CD8-positive, alpha-beta T cell (primary cell): ENCODE measurements at regions of chr11 and their contacts with region 1.

Region 1: DNA sequence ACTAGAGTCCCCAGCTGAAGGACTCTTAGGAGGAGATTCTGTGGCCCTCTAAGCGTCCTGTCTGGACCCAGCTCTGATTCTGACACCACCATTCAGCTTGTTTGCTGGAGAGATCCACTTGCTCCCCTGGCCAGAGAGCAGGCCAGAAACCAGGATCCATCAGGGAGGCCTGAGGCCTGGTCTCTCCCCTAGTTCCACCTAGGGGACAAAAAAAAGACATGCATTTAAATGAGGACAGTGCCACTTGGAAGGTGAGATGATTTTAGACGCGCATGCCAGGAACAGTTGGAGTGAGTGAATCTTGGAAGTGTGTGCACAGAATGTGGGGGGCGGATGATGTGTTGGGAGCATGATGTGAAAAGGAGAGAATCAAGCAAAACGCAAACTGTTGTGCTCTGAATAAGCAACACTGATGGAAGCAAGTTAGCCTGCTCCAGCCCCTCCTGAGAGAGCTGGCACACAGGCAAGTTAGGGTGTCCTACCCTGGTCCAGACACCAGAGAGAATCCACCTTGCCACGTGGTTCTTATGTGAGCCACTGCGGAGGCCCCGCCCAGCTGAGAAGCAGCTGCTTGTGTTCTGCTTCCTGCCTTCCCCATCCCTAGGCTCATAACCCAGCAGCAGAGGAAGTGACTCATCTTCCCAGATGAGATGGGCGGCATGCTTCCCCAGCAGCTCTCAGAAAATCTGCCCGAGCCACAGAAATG is 8.0 kb upstream of the SLCO2B1 start:
- DNase-seq: peak in 8 of 9 experiments; percentile 58 to 87 (median 76)
- ATAC-seq: peak; percentile 89
- H3K4me3 ChIP-seq: no peak overlapping the region
- H3K4me3 Mint-ChIP-seq: peak overlapping the region; percentile 41
- H3K27ac ChIP-seq: peak overlapping the region in 1 of 2 experiments; percentile 43
- H3K27ac Mint-ChIP-seq: peak overlapping the region; percentile 79
- H3K4me1 ChIP-seq: peaks cover 30% of the 10 kb centered on the region
- H3K4me1 Mint-ChIP-seq: peaks cover 36% of the 10 kb centered on the region
- H3K27me3 ChIP-seq: no peaks in the 10 kb centered on the region
- H3K27me3 Mint-ChIP-seq: no peaks in the 10 kb centered on the region
- CTCF ChIP-seq: no peak

Region 2: GRCh38 chr11:74929431-74930363 is 213.2 kb before region 1 on chr11:
- CTCF ChIA-PET with region 1: interaction called, 16 read pairs
- POLR2A ChIA-PET with region 1: no interaction called
- intact Hi-C with region 1: loop called (anchors 1 to 5 kb)
- DNase-seq: peak; percentile 30 to 86 (median 66)
- ATAC-seq: peak; percentile 76
- H3K4me3 ChIP-seq: no peak overlapping the region
- H3K4me3 Mint-ChIP-seq: no peak overlapping the region
- H3K27ac ChIP-seq: no peak overlapping the region
- H3K27ac Mint-ChIP-seq: no peak overlapping the region
- H3K4me1 ChIP-seq: no peaks in the 10 kb centered on the region
- H3K4me1 Mint-ChIP-seq: no peaks in the 10 kb centered on the region
- H3K27me3 ChIP-seq: no peaks in the 10 kb centered on the region
- H3K27me3 Mint-ChIP-seq: no peaks in the 10 kb centered on the region
- CTCF ChIP-seq: peak; percentile 90

Region 3: GRCh38 chr11:75174781-75175370 is 32.0 kb after region 1 on chr11:
- CTCF ChIA-PET with region 1: interaction called, 13 read pairs
- POLR2A ChIA-PET with region 1: no interaction called
- intact Hi-C with region 1: no loop called
- DNase-seq: peak in 1 of 9 experiments; percentile 28
- ATAC-seq: no peak
- H3K4me3 ChIP-seq: no peak overlapping the region
- H3K4me3 Mint-ChIP-seq: no peak overlapping the region
- H3K27ac ChIP-seq: no peak overlapping the region
- H3K27ac Mint-ChIP-seq: no peak overlapping the region
- H3K4me1 ChIP-seq: peaks cover 12% of the 10 kb centered on the region
- H3K4me1 Mint-ChIP-seq: peaks cover 13% of the 10 kb centered on the region
- H3K27me3 ChIP-seq: no peaks in the 10 kb centered on the region
- H3K27me3 Mint-ChIP-seq: no peaks in the 10 kb centered on the region
- CTCF ChIP-seq: no peak

Region 4: DNA sequence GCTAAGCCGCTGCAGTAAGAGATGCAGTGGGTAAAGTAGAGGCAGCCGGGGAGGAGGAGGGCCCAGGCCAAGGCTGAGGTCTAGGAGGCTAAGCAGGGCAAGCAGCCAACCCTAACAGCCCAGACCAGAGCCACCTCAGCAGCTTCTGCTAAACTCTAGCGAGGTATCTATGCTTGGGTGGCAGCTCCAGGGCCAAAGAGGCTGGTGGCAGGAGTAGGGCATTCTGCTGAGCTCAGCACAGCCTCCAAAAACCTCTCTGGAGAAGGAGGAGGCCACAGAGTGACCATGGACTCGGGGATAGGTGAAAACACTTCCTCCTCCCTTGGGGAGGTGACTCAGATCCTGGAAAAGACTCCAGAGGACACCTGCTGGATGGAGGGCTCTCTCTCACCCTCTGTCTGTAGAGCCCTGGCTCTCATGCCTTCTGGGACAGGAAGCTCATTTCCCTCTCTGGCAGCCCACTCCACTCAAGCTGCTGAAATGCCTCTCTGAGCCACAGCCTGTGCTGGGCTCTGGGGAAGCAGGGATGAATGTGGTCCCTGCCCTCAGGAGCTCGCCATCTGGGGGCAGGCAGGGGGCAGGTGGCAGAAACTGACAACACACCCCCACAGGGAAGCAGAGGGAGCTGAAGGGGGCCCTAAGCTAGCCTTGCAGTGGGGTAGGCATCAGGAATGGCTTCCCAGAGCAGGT is 81.2 kb after region 1 on chr11:
- CTCF ChIA-PET with region 1: interaction called, 20 read pairs
- POLR2A ChIA-PET with region 1: no interaction called
- intact Hi-C with region 1: no loop called
- DNase-seq: no peak
- ATAC-seq: no peak
- H3K4me3 ChIP-seq: no peak overlapping the region
- H3K4me3 Mint-ChIP-seq: no peak overlapping the region
- H3K27ac ChIP-seq: no peak overlapping the region
- H3K27ac Mint-ChIP-seq: no peak overlapping the region
- H3K4me1 ChIP-seq: no peaks in the 10 kb centered on the region
- H3K4me1 Mint-ChIP-seq: no peaks in the 10 kb centered on the region
- H3K27me3 ChIP-seq: no peaks in the 10 kb centered on the region
- H3K27me3 Mint-ChIP-seq: peaks cover 3% of the 10 kb centered on the region
- CTCF ChIP-seq: no peak

Region 5: DNA sequence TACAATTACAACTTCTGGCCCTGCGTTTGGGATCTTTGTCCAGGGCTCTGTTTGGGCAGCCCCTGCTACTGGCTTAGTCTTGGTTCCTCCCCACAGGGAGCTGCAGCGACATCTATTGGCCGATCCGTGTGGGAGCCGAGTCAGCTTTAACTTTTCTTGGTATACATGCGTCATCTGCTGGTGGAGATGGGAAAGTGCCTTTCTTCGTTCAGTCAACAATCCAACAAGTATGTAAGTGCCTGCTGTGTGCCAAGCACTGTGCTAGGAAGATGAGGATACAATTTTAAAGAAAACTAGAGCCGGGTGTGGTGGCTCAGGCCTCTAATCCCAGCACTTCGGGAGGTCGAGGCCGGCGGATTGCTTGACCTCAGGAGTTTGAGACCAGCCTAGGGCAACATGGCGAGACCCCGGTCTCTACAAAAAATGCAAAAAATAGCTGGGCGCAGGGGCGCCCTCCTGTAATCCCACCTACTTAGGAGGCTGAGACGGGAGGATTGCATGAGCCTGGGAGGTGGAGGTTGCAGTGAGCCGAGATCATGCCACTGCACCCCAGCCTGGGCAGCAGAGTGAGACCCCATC is 105.9 kb after region 1 on chr11:
- CTCF ChIA-PET with region 1: interaction called, 625 read pairs
- POLR2A ChIA-PET with region 1: interaction called, 6 read pairs
- intact Hi-C with region 1: loop called (anchors 1 kb)
- DNase-seq: peak; percentile 77 to 91 (median 87)
- ATAC-seq: peak; percentile 100
- H3K4me3 ChIP-seq: no peak overlapping the region
- H3K4me3 Mint-ChIP-seq: no peak overlapping the region
- H3K27ac ChIP-seq: no peak overlapping the region
- H3K27ac Mint-ChIP-seq: no peak overlapping the region
- H3K4me1 ChIP-seq: no peaks in the 10 kb centered on the region
- H3K4me1 Mint-ChIP-seq: no peaks in the 10 kb centered on the region
- H3K27me3 ChIP-seq: no peaks in the 10 kb centered on the region
- H3K27me3 Mint-ChIP-seq: peaks cover 2% of the 10 kb centered on the region
- CTCF ChIP-seq: peak; percentile 100

Region 6: DNA sequence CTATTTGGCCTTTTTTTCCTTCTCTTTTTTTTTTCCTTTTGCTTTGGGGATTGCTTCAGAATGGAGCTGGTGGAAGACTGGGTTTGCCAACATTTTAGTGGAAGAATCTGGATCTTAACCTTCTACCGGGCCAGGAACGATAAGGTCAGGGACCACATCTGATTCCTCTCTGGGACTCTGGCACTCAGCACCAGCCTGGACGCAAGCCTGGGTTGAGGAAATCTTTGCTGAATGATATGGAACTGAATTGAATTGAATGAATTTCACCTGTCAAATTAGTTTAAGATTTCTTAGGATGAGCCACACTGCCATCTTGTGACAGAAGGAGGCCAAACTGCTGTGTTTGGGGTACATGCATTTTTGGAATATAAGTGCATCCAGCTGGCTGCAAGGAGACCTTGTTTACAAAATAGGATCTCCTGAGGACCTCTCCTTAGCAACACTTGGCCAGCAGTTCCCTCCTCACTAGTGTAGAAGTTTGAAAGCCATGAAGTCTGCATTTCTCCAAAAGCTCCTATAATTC is 128.1 kb after region 1 on chr11:
- CTCF ChIA-PET with region 1: interaction called, 177 read pairs
- POLR2A ChIA-PET with region 1: interaction called, 6 read pairs
- intact Hi-C with region 1: loop called (anchors 1 kb)
- DNase-seq: peak in 3 of 9 experiments; percentile 24 to 61 (median 44)
- ATAC-seq: no peak
- H3K4me3 ChIP-seq: no peak overlapping the region
- H3K4me3 Mint-ChIP-seq: no peak overlapping the region
- H3K27ac ChIP-seq: no peak overlapping the region
- H3K27ac Mint-ChIP-seq: peak overlapping the region; percentile 98
- H3K4me1 ChIP-seq: peaks cover 52% of the 10 kb centered on the region
- H3K4me1 Mint-ChIP-seq: peaks cover 44% of the 10 kb centered on the region
- H3K27me3 ChIP-seq: no peaks in the 10 kb centered on the region
- H3K27me3 Mint-ChIP-seq: no peaks in the 10 kb centered on the region
- CTCF ChIP-seq: peak; percentile 48